ENCODE measurements at regions of chr2 and their contacts with region 1.

Region 1: DNA sequence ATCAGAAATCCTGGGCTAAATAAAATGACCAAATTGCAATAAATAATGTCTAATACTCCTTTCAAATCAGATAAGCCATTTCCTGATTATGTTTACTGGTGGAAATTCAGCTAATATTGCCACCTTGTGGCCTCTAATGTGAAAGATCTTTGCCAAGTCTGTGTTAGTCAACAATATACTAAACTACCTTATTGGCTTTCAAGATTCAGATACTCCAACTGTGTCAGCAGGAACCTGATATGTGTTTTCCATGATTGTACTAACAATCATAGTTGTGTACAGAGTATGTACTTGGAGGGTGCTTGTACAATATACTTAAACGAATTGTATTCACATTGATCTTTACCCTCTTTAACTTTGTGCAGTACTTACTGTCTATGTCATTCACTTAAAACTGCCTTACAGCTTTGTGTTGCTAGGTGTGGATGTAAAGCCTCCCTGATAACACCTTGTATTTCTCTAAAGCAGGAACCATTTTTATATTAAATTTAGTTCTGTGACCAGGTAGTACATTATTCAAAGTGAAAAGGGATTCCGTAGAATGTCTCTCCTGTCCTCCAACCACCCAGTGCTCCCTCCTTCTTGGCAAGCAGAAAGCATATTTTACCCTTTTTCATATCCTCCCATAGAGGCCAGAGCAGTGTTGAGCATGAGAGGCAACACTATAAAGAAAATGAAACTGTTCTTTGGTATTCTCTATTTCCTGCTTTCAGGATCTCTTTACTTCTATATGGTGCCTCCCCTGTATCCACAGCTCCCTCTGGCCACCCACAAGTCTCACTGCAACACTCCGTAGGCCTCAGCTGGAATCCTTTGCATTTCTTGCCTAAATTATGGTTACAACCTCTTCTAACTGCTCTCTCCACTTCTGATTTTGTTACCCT is 75.2 kb upstream of the C2orf15 start:
- DNase-seq: peak; percentile 26 to 49 (median 42)
- H3K4me3 ChIP-seq: peak overlapping the region in 1 of 2 donors; percentile 15
- H3K4me3 Mint-ChIP-seq: no peak overlapping the region
- H3K27ac ChIP-seq: peak overlapping the region; percentile 7
- H3K27ac Mint-ChIP-seq: no peak overlapping the region
- H3K4me1 ChIP-seq: peaks cover 18% of the 10 kb centered on the region
- H3K4me1 Mint-ChIP-seq: peaks cover 0 to 7% (median 1%) of the 10 kb centered on the region in 4 donors
- H3K27me3 ChIP-seq: no peaks in the 10 kb centered on the region
- H3K27me3 Mint-ChIP-seq: no peaks in the 10 kb centered on the region

Region 2: GRCh38 chr2:97806738-97807618 is 1259.3 kb before region 1 on chr2:
- CTCF ChIA-PET with region 1: interaction called, 3 read pairs
- POLR2A ChIA-PET with region 1: no interaction called
- intact Hi-C with region 1: loop called (anchors 5 kb)
- DNase-seq: peak; percentile 63 to 71 (median 68)
- H3K4me3 ChIP-seq: no peak overlapping the region
- H3K4me3 Mint-ChIP-seq: no peak overlapping the region
- H3K27ac ChIP-seq: no peak overlapping the region
- H3K27ac Mint-ChIP-seq: no peak overlapping the region
- H3K4me1 ChIP-seq: no peaks in the 10 kb centered on the region
- H3K4me1 Mint-ChIP-seq: peaks cover 0 to 3% (median 0%) of the 10 kb centered on the region in 4 donors
- H3K27me3 ChIP-seq: no peaks in the 10 kb centered on the region
- H3K27me3 Mint-ChIP-seq: no peaks in the 10 kb centered on the region

Region 3: GRCh38 chr2:98649135-98649991 is 417.0 kb before region 1 on chr2:
- CTCF ChIA-PET with region 1: interaction called, 5 read pairs
- POLR2A ChIA-PET with region 1: interaction called, 3 read pairs
- intact Hi-C with region 1: loop called (anchors 1 kb)
- DNase-seq: peak; percentile 79 to 85 (median 81)
- H3K4me3 ChIP-seq: no peak overlapping the region
- H3K4me3 Mint-ChIP-seq: peak overlapping the region in 5 of 8 donors; percentile 10 to 73 (median 33)
- H3K27ac ChIP-seq: peak overlapping the region; percentile 10
- H3K27ac Mint-ChIP-seq: peak overlapping the region; percentile 66 to 89 (median 84)
- H3K4me1 ChIP-seq: peaks cover 52% of the 10 kb centered on the region
- H3K4me1 Mint-ChIP-seq: peaks cover 45 to 60% (median 54%) of the 10 kb centered on the region in 4 donors
- H3K27me3 ChIP-seq: no peaks in the 10 kb centered on the region
- H3K27me3 Mint-ChIP-seq: no peaks in the 10 kb centered on the region

Region 4: DNA sequence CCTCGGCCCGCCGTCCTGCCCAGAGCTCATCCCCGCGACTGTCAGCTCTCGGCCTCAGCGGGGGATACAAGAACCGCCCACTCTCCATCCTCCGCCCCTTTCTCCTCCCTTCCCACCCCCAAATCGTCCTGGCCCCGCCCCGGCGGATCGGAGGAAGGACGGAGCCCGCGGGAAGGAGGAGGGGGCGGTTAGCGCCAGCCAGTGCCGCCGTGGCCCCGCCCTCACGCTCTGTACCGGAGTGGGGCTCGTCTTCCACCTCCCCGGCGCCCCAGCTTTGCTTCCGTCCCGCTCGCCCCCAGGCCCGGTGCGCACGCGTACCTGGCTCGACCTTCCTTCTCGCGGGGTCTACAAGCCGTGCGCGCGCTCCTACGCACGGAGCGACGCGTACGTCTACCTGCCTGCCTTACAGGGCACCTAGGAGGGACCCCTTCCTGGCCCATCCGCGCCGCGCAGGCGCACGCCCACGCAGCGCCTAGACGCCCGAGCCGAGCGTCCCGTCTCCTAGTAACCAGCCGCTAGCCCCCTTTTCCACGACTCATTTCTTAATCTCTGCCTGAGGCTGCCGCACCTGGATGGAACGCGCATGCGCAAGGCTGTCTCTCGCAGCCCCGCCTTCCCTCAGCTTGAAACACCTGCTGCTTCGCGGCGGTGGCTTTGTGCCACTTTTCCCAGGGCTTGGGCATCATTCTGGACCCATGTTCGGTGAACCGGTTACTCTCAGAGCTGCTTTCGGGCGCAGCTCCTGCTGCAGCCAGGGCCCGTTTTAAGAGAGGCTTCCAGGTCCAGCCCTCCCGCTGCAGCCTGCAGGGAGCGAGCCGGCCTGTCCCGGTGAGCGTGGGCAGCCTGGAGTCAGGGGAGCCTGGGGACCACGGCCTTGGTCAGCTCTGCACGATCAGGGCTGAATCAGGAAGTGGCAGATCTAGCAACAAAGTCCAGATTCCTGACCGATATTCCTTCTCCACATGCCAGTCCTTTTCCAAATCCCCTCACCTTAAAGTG is 75.1 kb after region 1 on chr2 and contains the start of gene C2orf15:
- CTCF ChIA-PET with region 1: interaction called, 3 read pairs
- POLR2A ChIA-PET with region 1: interaction called, 4 read pairs
- intact Hi-C with region 1: loop called (anchors 2 kb)
- DNase-seq: peak; percentile 97 to 98 (median 97)
- H3K4me3 ChIP-seq: peak within 1 kb of the TSS; percentile 50 to 97
- H3K4me3 Mint-ChIP-seq: peak within 1 kb of the TSS; percentile 93 to 99 (median 96)
- H3K27ac ChIP-seq: peak within 1 kb of the TSS; percentile 86
- H3K27ac Mint-ChIP-seq: peak within 1 kb of the TSS; percentile 96 to 99 (median 98)
- H3K4me1 ChIP-seq: peaks cover 18% of the 10 kb centered on the region
- H3K4me1 Mint-ChIP-seq: peaks cover 11 to 31% (median 17%) of the 10 kb centered on the region in 4 donors
- H3K27me3 ChIP-seq: no peaks in the 10 kb centered on the region
- H3K27me3 Mint-ChIP-seq: no peaks in the 10 kb centered on the region
- total RNA-seq, gene C2orf15: 2.3 to 3.2 TPM

Region 5: GRCh38 chr2:99489761-99490622 is 423.7 kb after region 1 on chr2 and contains the start of gene REV1:
- CTCF ChIA-PET with region 1: no interaction called
- POLR2A ChIA-PET with region 1: no interaction called
- intact Hi-C with region 1: loop called (anchors 1 kb)
- DNase-seq: peak; percentile 95 to 98 (median 96)
- H3K4me3 ChIP-seq: peak within 1 kb of the TSS; percentile 76 to 89
- H3K4me3 Mint-ChIP-seq: peak within 1 kb of the TSS; percentile 94 to 100 (median 98)
- H3K27ac ChIP-seq: peak within 1 kb of the TSS; percentile 69
- H3K27ac Mint-ChIP-seq: peak within 1 kb of the TSS; percentile 95 to 99 (median 98)
- H3K4me1 ChIP-seq: peaks cover 35% of the 10 kb centered on the region
- H3K4me1 Mint-ChIP-seq: peaks cover 24 to 43% (median 32%) of the 10 kb centered on the region in 4 donors
- H3K27me3 ChIP-seq: no peaks in the 10 kb centered on the region
- H3K27me3 Mint-ChIP-seq: peaks cover 3 to 5% of the 10 kb centered on the region in 2 donors
- total RNA-seq, gene REV1: 60.1 to 62.0 TPM

Measured in CD4-positive, alpha-beta memory T cell (primary cell).